H1 (cell line): ENCODE measurements at regions of chr7 and their contacts with region 1.

Region 1: GRCh38 chr7:151110941-151111645 is 24.8 kb downstream of the AGAP3 start:
- DNase-seq: peak in 1 of 2 experiments; percentile 91
- H3K4me3 ChIP-seq: no peak overlapping the region
- H3K27ac ChIP-seq: no peak overlapping the region
- H3K4me1 ChIP-seq: peaks cover 0 to 21% (median 15%) of the 10 kb centered on the region in 4 experiments; a peak in 6 of 7 replicates
- H3K27me3 ChIP-seq: peaks cover 0 to 11% (median 7%) of the 10 kb centered on the region in 4 experiments; a peak in 3 of 7 replicates
- CTCF ChIP-seq: peak in 2 of 3 experiments; percentile 95 to 96; a peak in 3 of 4 replicates
- EP300 ChIP-seq: no peak
- POLR2A ChIP-seq: no peak
- RAD21 ChIP-seq: peak; percentile 92 to 93

Region 2: GRCh38 chr7:150988230-150989226 is 122.6 kb before region 1 on chr7:
- CTCF ChIA-PET with region 1: interaction called, 25 read pairs
- POLR2A ChIA-PET with region 1: no interaction called
- DNase-seq: peak in 1 of 2 experiments; percentile 98
- H3K4me3 ChIP-seq: peak overlapping the region in 3 of 4 experiments; percentile 30 to 55 (median 42); a peak in 7 of 8 replicates
- H3K27ac ChIP-seq: no peak overlapping the region; the same call in 1 of the 2 replicates
- H3K4me1 ChIP-seq: peaks cover 4 to 17% (median 11%) of the 10 kb centered on the region in 4 experiments
- H3K27me3 ChIP-seq: no peaks in the 10 kb centered on the region
- CTCF ChIP-seq: peak in 2 of 3 experiments; percentile 92 to 97; a peak in 3 of 4 replicates
- EP300 ChIP-seq: no peak
- POLR2A ChIP-seq: no peak
- RAD21 ChIP-seq: peak; percentile 89 to 96

Region 3: GRCh38 chr7:151017953-151018420 is 93.1 kb before region 1 on chr7:
- CTCF ChIA-PET with region 1: interaction called, 112 read pairs
- POLR2A ChIA-PET with region 1: interaction called, 3 read pairs
- DNase-seq: peak in 1 of 2 experiments; percentile 99
- H3K4me3 ChIP-seq: peak overlapping the region in 2 of 4 experiments; percentile 17 to 50; a peak in 5 of 8 replicates
- H3K27ac ChIP-seq: no peak overlapping the region
- H3K4me1 ChIP-seq: peaks cover 0 to 29% (median 19%) of the 10 kb centered on the region in 4 experiments; a peak in 5 of 7 replicates
- H3K27me3 ChIP-seq: peaks cover 8 to 46% (median 39%) of the 10 kb centered on the region in 4 experiments
- CTCF ChIP-seq: peak in 2 of 3 experiments; percentile 95 to 97; a peak in 3 of 4 replicates
- EP300 ChIP-seq: peak in 1 of 2 experiments; percentile 40; a peak in 1 of 3 replicates
- POLR2A ChIP-seq: no peak
- RAD21 ChIP-seq: peak; percentile 58 to 72

Region 4: GRCh38 chr7:151057989-151058780 is 52.9 kb before region 1 on chr7:
- CTCF ChIA-PET with region 1: interaction called, 88 read pairs
- POLR2A ChIA-PET with region 1: interaction called, 9 read pairs
- DNase-seq: peak; percentile 98 to 99
- H3K4me3 ChIP-seq: peak overlapping the region; percentile 59 to 91 (median 78)
- H3K27ac ChIP-seq: peak overlapping the region; percentile 61; the same call in 1 of the 2 replicates
- H3K4me1 ChIP-seq: peaks cover 9 to 41% (median 29%) of the 10 kb centered on the region in 4 experiments
- H3K27me3 ChIP-seq: peaks cover 0 to 9% (median 4%) of the 10 kb centered on the region in 4 experiments; a peak in 5 of 7 replicates
- CTCF ChIP-seq: no peak
- EP300 ChIP-seq: no peak
- POLR2A ChIP-seq: peak in 1 of 2 experiments; percentile 49; a peak in 1 of 3 replicates
- RAD21 ChIP-seq: no peak

Region 5: GRCh38 chr7:151074051-151074450 is 37.0 kb before region 1 on chr7:
- CTCF ChIA-PET with region 1: interaction called, 59 read pairs
- POLR2A ChIA-PET with region 1: interaction called, 26 read pairs
- DNase-seq: no peak
- H3K4me3 ChIP-seq: no peak overlapping the region
- H3K27ac ChIP-seq: no peak overlapping the region
- H3K4me1 ChIP-seq: peaks cover 0 to 13% (median 7%) of the 10 kb centered on the region in 4 experiments; a peak in 6 of 7 replicates
- H3K27me3 ChIP-seq: no peaks in the 10 kb centered on the region
- CTCF ChIP-seq: no peak
- EP300 ChIP-seq: no peak
- POLR2A ChIP-seq: no peak
- RAD21 ChIP-seq: no peak

Region 6: GRCh38 chr7:151085691-151086620 is 25.1 kb before region 1 on chr7 and contains the start of gene AGAP3:
- CTCF ChIA-PET with region 1: interaction called, 448 read pairs
- POLR2A ChIA-PET with region 1: interaction called, 7 read pairs
- DNase-seq: peak in 1 of 2 experiments; percentile 86
- H3K4me3 ChIP-seq: peak within 1 kb of the TSS; percentile 58 to 75 (median 66)
- H3K27ac ChIP-seq: no peak within 1 kb of the TSS
- H3K4me1 ChIP-seq: peaks cover 6 to 52% (median 31%) of the 10 kb centered on the region in 4 experiments
- H3K27me3 ChIP-seq: peaks cover 0 to 28% (median 14%) of the 10 kb centered on the region in 4 experiments; a peak in 6 of 7 replicates
- CTCF ChIP-seq: no peak
- EP300 ChIP-seq: no peak
- POLR2A ChIP-seq: peak in 1 of 2 experiments; percentile 48; a peak in 1 of 3 replicates
- RAD21 ChIP-seq: no peak
- total RNA-seq, gene AGAP3: 66.4 and 68.1 TPM in 2 replicates

Region 7: DNA sequence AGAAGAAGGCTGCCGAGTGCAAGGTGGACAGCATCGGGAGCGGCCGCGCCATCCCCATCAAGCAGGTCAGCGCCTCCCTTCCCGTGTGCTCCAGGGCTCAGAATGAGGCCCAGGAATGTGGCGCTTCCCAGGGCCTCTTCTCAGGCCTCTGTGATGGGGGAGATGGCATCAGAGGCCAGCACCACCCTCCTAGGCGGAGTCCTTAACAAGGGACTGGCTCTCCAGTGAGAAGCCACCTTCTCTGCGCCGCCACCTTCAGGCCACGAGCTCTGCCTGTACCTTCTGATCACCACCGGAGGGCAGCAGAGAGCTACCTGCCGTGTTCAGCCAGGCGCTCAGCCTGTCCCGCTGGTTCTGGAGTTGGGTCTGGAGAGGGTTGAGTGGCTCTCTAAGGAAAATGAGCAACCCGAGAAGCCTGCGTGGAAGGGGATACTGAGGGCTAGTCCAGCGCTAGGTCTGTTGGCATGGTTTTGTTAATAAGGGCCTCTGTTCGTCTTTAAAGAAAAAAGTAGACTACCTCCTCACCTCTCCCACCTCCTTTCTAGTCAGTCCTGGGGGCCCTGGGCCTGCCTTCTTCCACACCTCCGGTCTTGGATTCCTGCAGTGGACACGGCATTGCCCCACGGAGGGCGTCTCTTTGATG is 12.8 kb after region 1 on chr7:
- CTCF ChIA-PET with region 1: interaction called, 30 read pairs
- POLR2A ChIA-PET with region 1: interaction called, 3 read pairs
- DNase-seq: peak in 1 of 2 experiments; percentile 94
- H3K4me3 ChIP-seq: no peak overlapping the region
- H3K27ac ChIP-seq: no peak overlapping the region
- H3K4me1 ChIP-seq: peaks cover 0 to 23% (median 7%) of the 10 kb centered on the region in 4 experiments; a peak in 6 of 7 replicates
- H3K27me3 ChIP-seq: peaks cover 0 to 13% (median 4%) of the 10 kb centered on the region in 4 experiments; a peak in 5 of 7 replicates
- CTCF ChIP-seq: peak in 2 of 3 experiments; percentile 99 to 100; a peak in 3 of 4 replicates
- EP300 ChIP-seq: no peak
- POLR2A ChIP-seq: no peak
- RAD21 ChIP-seq: peak; percentile 96 to 98